Breast epithelium (tissue), 4 donors: ENCODE measurements at regions of chr17 and their contacts with region 1.

Region 1: GRCh38 chr17:39845052-39845846 is 18.9 kb downstream of the IKZF3 start:
- DNase-seq: no peak
- H3K4me3 ChIP-seq: no peak overlapping the region
- H3K27ac ChIP-seq: no peak overlapping the region
- H3K4me1 ChIP-seq: no peaks in the 10 kb centered on the region
- H3K27me3 ChIP-seq: no peaks in the 10 kb centered on the region
- CTCF ChIP-seq: no peak
- POLR2A ChIP-seq: no peak

Region 2: DNA sequence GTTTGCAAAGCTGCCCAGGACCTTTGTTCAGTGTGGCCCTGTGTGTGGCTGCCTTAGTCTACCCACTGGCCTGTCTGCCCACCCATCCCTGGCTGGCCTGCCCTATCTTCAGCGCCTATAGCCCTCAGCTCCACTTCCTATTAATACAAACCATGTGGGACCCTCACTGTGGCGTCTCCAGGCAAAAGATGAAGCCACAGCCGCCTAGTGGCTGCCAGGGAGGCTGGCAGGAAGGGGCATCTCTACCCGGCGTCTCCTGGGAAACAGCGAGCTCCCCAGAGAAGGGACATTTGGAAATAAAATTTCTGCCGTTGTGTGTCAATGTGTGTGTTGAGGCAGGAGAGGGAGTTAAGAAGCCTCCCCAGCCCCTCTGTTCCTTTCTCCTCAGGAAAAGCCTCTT is 269.1 kb before region 1 on chr17:
- intact Hi-C with region 1: loop called (anchors 5 kb)
- DNase-seq: no peak
- H3K4me3 ChIP-seq: no peak overlapping the region
- H3K27ac ChIP-seq: no peak overlapping the region
- H3K4me1 ChIP-seq: no peaks in the 10 kb centered on the region
- H3K27me3 ChIP-seq: no peaks in the 10 kb centered on the region
- CTCF ChIP-seq: no peak
- POLR2A ChIP-seq: no peak

Region 3: GRCh38 chr17:39813631-39814030 is 31.6 kb before region 1 on chr17:
- intact Hi-C with region 1: no loop called
- DNase-seq: no peak
- H3K4me3 ChIP-seq: no peak overlapping the region
- H3K27ac ChIP-seq: no peak overlapping the region
- H3K4me1 ChIP-seq: no peaks in the 10 kb centered on the region
- H3K27me3 ChIP-seq: no peaks in the 10 kb centered on the region
- CTCF ChIP-seq: no peak
- POLR2A ChIP-seq: no peak

Region 4: GRCh38 chr17:39952680-39953470 is 107.6 kb after region 1 on chr17:
- intact Hi-C with region 1: no loop called
- DNase-seq: peak; percentile 96 to 99
- H3K4me3 ChIP-seq: peak overlapping the region; percentile 38 to 65 (median 47)
- H3K27ac ChIP-seq: peak overlapping the region; percentile 78 to 87
- H3K4me1 ChIP-seq: no peaks in the 10 kb centered on the region
- H3K27me3 ChIP-seq: no peaks in the 10 kb centered on the region
- CTCF ChIP-seq: no peak
- POLR2A ChIP-seq: no peak